Activated CD4-positive, alpha-beta memory T cell treated with anti-CD3 and anti-CD28 coated beads for 36 hours (primary cell): ENCODE measurements at regions of chr5 and their contacts with region 1.

Region 1: GRCh38 chr5:156934450-156935211 is 28.4 kb downstream of the TIMD4 start:
- DNase-seq: peak; percentile 77
- H3K4me3 Mint-ChIP-seq: peak overlapping the region; percentile 8
- H3K27ac Mint-ChIP-seq: peak overlapping the region; percentile 76
- H3K4me1 Mint-ChIP-seq: peaks cover 32% of the 10 kb centered on the region
- H3K27me3 Mint-ChIP-seq: no peaks in the 10 kb centered on the region

Region 2: GRCh38 chr5:155616779-155617392 is 1317.7 kb before region 1 on chr5:
- CTCF ChIA-PET with region 1: no interaction called
- POLR2A ChIA-PET with region 1: no interaction called
- intact Hi-C with region 1: loop called (anchors 2 kb)
- DNase-seq: peak; percentile 62
- H3K4me3 Mint-ChIP-seq: no peak overlapping the region
- H3K27ac Mint-ChIP-seq: no peak overlapping the region
- H3K4me1 Mint-ChIP-seq: no peaks in the 10 kb centered on the region
- H3K27me3 Mint-ChIP-seq: peaks cover 15% of the 10 kb centered on the region

Region 3: DNA sequence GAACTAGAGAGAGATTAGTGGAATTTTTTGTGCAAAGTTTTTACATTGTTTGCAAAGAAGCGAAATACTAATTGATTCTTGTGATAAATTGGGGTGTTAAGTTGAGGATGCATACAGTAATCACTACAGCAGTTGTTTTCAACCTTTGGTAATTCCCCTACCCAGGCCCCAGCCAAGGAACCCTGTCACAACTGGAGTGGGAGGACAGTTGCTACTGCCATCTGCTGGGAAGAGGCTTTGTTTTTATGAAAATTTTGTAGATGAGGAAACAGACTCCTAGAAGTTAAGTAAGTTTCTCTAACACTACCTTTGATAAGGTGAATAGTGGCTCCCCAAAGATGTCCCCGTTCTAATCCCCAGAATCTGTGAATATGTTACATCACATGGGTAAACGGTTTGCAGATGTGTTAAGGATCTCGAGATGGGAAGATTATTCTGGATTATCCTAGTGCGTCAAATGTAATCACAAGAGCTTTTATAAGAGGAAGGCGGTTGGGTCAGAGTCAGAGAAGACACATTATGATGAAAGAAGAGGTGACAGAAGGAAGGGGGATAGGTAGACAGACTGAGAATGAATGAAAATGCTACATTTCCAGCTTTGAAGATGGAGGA is 118.5 kb before region 1 on chr5:
- CTCF ChIA-PET with region 1: interaction called, 4 read pairs
- POLR2A ChIA-PET with region 1: no interaction called
- intact Hi-C with region 1: loop called (anchors 1 kb)
- DNase-seq: peak; percentile 53
- H3K4me3 Mint-ChIP-seq: no peak overlapping the region
- H3K27ac Mint-ChIP-seq: no peak overlapping the region
- H3K4me1 Mint-ChIP-seq: no peaks in the 10 kb centered on the region
- H3K27me3 Mint-ChIP-seq: no peaks in the 10 kb centered on the region

Region 4: GRCh38 chr5:156835905-156836304 is 98.7 kb before region 1 on chr5:
- CTCF ChIA-PET with region 1: interaction called, 3 read pairs
- POLR2A ChIA-PET with region 1: interaction called, 3 read pairs
- intact Hi-C with region 1: loop called (anchors 2 kb)
- DNase-seq: no peak
- H3K4me3 Mint-ChIP-seq: no peak overlapping the region
- H3K27ac Mint-ChIP-seq: no peak overlapping the region
- H3K4me1 Mint-ChIP-seq: no peaks in the 10 kb centered on the region
- H3K27me3 Mint-ChIP-seq: peaks cover 2% of the 10 kb centered on the region

Region 5: DNA sequence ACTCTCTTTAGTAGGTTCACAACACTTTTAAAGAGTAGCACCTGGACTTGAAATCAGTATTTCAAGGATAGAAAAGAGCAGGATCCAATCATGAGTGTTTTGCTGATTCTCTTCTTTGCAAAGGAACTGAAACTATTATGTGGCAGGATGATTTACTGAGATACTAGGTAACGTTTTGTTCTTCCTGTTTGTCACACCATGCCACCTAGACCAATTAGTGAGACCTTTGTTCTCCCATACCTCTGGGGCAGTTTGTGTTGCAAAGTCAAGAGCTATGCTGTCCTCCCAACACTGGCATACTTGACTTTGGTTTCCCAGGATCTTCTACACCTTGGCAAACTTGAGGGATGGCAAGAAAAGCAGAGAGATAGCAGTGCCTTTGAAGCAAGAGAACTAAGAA is 41.1 kb before region 1 on chr5:
- CTCF ChIA-PET with region 1: interaction called, 6 read pairs
- POLR2A ChIA-PET with region 1: no interaction called
- intact Hi-C with region 1: loop called (anchors 1 kb)
- DNase-seq: no peak
- H3K4me3 Mint-ChIP-seq: no peak overlapping the region
- H3K27ac Mint-ChIP-seq: peak overlapping the region; percentile 18
- H3K4me1 Mint-ChIP-seq: peaks cover 33% of the 10 kb centered on the region
- H3K27me3 Mint-ChIP-seq: no peaks in the 10 kb centered on the region

Region 6: DNA sequence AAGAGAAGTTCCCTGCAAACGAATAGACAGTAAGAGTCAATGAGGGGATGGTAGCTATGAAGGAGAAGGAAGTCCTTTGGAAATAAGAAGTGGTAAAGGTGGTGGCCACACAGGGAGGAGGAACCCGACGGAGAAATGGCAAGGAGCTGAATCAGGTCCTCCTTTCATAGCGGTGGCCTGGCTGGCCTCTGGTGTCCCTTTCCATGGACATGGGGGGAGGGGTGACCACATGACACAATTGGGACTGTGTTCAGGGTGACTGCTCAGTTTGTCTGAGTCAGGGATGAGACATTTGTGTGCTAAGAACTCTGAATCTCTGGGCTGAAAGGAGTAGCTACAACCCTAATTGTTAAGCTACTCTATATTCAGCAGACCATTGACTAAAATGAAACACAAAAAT is 57.1 kb after region 1 on chr5:
- CTCF ChIA-PET with region 1: no interaction called
- POLR2A ChIA-PET with region 1: no interaction called
- intact Hi-C with region 1: no loop called
- DNase-seq: no peak
- H3K4me3 Mint-ChIP-seq: no peak overlapping the region
- H3K27ac Mint-ChIP-seq: no peak overlapping the region
- H3K4me1 Mint-ChIP-seq: no peaks in the 10 kb centered on the region
- H3K27me3 Mint-ChIP-seq: no peaks in the 10 kb centered on the region